ENCODE measurements at regions of chr7 and their contacts with region 1.

Region 1: GRCh38 chr7:54831644-54832099 is 72.7 kb upstream of the SEC61G start:
- DNase-seq: peak; percentile 95
- ATAC-seq: peak; percentile 87
- H3K4me3 ChIP-seq: peak overlapping the region; percentile 60
- H3K27ac ChIP-seq: peak overlapping the region; percentile 100
- H3K4me1 ChIP-seq: peaks cover 31% of the 10 kb centered on the region
- H3K27me3 ChIP-seq: no peaks in the 10 kb centered on the region
- CTCF ChIP-seq: no peak

Region 2: GRCh38 chr7:54985405-54986330 is 154.0 kb after region 1 on chr7:
- CTCF ChIA-PET with region 1: no interaction called
- POLR2A ChIA-PET with region 1: interaction called, 4 read pairs
- intact Hi-C with region 1: loop called (anchors 5 kb)
- DNase-seq: peak; percentile 96
- ATAC-seq: peak; percentile 97
- H3K4me3 ChIP-seq: peak overlapping the region; percentile 21
- H3K27ac ChIP-seq: peak overlapping the region; percentile 93
- H3K4me1 ChIP-seq: peaks cover 38% of the 10 kb centered on the region
- H3K27me3 ChIP-seq: no peaks in the 10 kb centered on the region
- CTCF ChIP-seq: no peak

Region 3: DNA sequence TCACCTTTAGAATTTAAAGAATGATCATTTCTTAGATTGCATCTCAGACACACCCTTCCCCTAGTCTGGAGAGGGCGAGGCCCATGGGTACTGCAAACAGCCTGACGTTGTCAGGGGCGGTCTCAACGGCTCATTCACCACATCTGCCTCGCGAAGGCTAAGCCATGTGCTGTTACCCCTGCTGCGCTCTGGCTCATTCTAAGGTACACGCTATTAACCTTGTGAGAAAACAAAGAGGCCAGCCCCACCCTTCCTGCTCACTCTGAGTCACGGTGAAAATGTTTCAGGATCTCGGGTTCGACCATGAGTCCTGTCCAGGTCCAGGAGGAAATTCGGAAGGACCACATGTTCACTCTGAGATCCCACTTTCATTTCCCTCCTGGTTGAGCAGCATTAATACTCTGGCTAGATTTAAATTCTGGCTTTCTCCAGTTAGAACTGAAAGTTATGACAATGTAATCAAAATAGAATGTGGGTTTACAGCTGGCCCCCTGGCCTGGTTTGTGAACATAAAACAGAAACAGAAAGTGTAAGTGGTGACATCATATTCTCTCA is 242.3 kb after region 1 on chr7:
- CTCF ChIA-PET with region 1: no interaction called
- POLR2A ChIA-PET with region 1: no interaction called
- intact Hi-C with region 1: loop called (anchors 5 kb)
- DNase-seq: peak; percentile 98
- ATAC-seq: peak; percentile 98
- H3K4me3 ChIP-seq: peak overlapping the region; percentile 48; the same call in 1 of the 2 replicates
- H3K27ac ChIP-seq: peak overlapping the region; percentile 97
- H3K4me1 ChIP-seq: peaks cover 38% of the 10 kb centered on the region
- H3K27me3 ChIP-seq: no peaks in the 10 kb centered on the region
- CTCF ChIP-seq: no peak